Activated T-helper 1 cell treated with anti-CD3 and anti-CD28 coated beads, Interleukin-12 subunit alpha, Interleukin-12 subunit beta, Interleukin-2, Interleukin-4 antibody, amounts not matched to agents 30 ng/mL and 10 ng/mL and 1 ng/mL, durations not matched to agents 14 hours and 24 hours and 36 hours (primary cell): ENCODE measurements at regions of chr7 and their contacts with region 1.

Region 1: DNA sequence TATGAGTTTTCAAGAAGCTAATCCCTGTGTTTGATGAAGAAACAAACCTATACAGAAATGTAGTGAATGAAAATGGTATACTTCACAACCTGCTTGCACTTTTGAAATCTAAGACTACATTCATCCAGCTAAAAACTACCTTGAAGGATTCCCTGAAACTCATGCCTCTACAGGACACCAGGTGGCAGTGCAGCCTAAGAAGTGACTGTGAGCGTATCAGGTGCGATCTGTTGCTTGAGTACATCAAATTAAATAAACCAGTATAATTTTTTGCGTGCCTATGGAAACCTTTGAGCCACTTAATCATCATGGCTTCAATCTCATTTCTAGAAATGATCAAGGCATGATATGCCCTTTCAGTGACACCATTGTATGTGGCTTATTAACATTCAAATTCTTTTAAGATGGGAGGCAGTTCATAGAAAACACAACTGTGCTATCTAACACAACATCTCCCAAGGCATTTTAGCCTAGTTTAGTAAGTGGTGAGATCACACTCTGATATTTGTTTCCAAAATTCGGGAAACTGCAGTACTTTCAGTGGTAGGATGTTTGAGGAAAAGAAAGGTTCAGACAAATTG is 57.4 kb downstream of the PPP1R17 start:
- DNase-seq: peak; percentile 4
- H3K4me3 Mint-ChIP-seq: no peak overlapping the region
- H3K27ac Mint-ChIP-seq: no peak overlapping the region
- H3K4me1 Mint-ChIP-seq: no peaks in the 10 kb centered on the region
- H3K27me3 Mint-ChIP-seq: no peaks in the 10 kb centered on the region

Region 2: DNA sequence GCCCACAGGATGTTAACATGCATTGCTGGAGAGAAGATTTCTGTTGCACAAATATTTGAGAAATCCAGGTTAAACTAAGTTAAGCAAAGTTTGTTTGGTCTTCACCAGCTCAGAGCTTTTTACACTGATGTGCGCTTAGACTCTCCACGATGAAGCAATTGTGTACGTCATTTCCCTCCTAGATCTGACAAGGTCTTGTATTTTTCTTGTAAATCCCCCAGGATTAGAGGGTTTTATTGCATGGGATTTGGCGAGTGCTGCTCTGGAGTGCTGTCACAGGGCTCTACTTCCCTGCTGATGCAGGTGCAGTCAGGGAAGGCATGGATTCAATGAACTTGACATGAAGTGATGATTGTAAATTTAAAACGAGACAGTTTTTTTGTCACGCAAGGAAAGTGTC is 152.5 kb after region 1 on chr7:
- intact Hi-C with region 1: no loop called
- DNase-seq: no peak
- H3K4me3 Mint-ChIP-seq: no peak overlapping the region
- H3K27ac Mint-ChIP-seq: no peak overlapping the region
- H3K4me1 Mint-ChIP-seq: no peaks in the 10 kb centered on the region
- H3K27me3 Mint-ChIP-seq: no peaks in the 10 kb centered on the region

Region 3: DNA sequence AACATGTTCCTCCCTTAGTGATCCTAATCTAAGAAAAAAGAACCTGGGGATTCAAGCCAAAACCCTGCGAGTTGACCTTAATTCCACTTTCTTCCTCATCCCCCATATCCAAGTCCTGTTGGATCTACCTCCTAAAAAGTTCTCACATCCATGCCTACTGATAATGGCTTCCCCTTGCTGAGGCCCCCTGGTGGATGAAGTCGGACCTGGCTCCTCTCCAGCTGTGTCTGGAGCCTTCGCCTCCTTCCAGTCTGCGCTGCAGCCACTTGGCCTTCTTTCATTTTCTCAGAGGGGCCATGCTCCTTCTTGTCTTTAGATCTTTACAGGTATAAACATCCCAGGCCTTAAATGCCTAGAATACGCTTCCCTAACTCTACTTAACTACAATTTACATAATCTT is 317.8 kb after region 1 on chr7:
- intact Hi-C with region 1: loop called (anchors 10 kb)
- DNase-seq: no peak
- H3K4me3 Mint-ChIP-seq: no peak overlapping the region
- H3K27ac Mint-ChIP-seq: no peak overlapping the region
- H3K4me1 Mint-ChIP-seq: no peaks in the 10 kb centered on the region
- H3K27me3 Mint-ChIP-seq: no peaks in the 10 kb centered on the region

Region 4: GRCh38 chr7:32206987-32207386 is 462.6 kb after region 1 on chr7:
- intact Hi-C with region 1: loop called (anchors 2 kb)
- DNase-seq: no peak
- H3K4me3 Mint-ChIP-seq: no peak overlapping the region
- H3K27ac Mint-ChIP-seq: no peak overlapping the region
- H3K4me1 Mint-ChIP-seq: no peaks in the 10 kb centered on the region
- H3K27me3 Mint-ChIP-seq: peaks cover 2% of the 10 kb centered on the region

Region 5: DNA sequence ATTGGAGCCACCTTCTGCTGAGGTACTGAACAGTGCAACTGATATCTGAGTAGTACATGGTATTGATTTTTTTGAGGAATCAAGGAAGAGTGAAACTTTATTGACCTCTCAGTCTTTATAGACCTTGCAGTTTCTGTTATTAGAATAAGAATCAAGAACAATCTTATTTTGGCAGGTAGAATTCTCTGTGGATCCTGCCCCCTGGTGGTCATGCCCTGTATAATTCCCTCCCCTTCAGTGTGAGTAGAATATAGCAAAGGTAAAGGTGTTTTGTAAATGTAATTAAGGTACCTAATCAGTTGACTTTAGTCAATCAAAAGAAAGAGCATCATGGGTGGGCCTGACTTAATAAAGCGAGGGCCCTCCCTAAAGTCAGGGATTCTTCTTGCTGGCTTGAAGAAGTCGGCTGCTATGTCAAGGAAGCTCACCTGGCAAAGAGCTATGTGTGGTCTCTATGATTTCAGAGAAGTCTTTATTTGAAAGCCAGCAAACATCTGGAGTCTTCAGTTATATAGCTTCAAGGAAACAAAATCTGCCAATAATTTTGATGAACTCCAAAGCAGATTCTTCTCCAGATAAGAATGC is 603.0 kb after region 1 on chr7:
- intact Hi-C with region 1: loop called (anchors 2 kb)
- DNase-seq: no peak
- H3K4me3 Mint-ChIP-seq: no peak overlapping the region
- H3K27ac Mint-ChIP-seq: no peak overlapping the region
- H3K4me1 Mint-ChIP-seq: no peaks in the 10 kb centered on the region
- H3K27me3 Mint-ChIP-seq: no peaks in the 10 kb centered on the region

Region 6: DNA sequence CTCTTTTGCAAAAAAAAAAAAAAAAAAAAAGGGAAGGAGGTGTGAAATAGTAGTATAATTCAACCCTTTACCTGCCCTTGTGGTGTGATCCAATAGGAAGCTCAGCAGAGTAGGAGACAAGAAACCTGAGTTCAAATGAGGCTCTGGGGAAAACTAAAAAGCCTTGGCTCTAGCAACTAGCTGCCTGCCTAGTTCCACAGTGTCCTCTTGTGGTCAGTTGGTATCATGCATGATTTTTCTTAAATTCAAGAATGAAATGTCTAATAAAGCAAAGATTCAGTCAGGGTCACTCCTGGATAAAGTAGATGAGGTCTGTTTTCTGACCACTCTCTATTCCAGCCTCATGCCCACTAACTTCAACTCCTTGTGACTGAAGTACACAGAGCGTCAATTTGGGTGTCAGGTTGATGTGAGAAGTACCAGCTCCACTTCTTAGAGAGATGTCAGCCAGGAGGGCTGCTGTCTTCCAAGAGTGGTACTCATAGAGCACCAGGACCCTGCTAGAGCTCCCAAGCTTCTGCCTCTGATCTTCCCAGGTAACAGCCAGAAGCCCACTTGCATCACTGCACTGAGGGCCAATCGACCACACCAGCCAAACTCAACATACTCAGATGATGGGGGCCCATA is 735.3 kb after region 1 on chr7:
- intact Hi-C with region 1: loop called (anchors 5 kb)
- DNase-seq: no peak
- H3K4me3 Mint-ChIP-seq: no peak overlapping the region
- H3K27ac Mint-ChIP-seq: no peak overlapping the region
- H3K4me1 Mint-ChIP-seq: peaks cover 8% of the 10 kb centered on the region
- H3K27me3 Mint-ChIP-seq: peaks cover 4% of the 10 kb centered on the region

Region 7: GRCh38 chr7:33369888-33370287 is 1625.5 kb after region 1 on chr7:
- intact Hi-C with region 1: no loop called
- DNase-seq: no peak
- H3K4me3 Mint-ChIP-seq: no peak overlapping the region
- H3K27ac Mint-ChIP-seq: no peak overlapping the region
- H3K4me1 Mint-ChIP-seq: no peaks in the 10 kb centered on the region
- H3K27me3 Mint-ChIP-seq: no peaks in the 10 kb centered on the region